Posterior cingulate gyrus (tissue), 11 donors: ENCODE measurements at regions of chr19 and their contacts with region 1.

Region 1: DNA sequence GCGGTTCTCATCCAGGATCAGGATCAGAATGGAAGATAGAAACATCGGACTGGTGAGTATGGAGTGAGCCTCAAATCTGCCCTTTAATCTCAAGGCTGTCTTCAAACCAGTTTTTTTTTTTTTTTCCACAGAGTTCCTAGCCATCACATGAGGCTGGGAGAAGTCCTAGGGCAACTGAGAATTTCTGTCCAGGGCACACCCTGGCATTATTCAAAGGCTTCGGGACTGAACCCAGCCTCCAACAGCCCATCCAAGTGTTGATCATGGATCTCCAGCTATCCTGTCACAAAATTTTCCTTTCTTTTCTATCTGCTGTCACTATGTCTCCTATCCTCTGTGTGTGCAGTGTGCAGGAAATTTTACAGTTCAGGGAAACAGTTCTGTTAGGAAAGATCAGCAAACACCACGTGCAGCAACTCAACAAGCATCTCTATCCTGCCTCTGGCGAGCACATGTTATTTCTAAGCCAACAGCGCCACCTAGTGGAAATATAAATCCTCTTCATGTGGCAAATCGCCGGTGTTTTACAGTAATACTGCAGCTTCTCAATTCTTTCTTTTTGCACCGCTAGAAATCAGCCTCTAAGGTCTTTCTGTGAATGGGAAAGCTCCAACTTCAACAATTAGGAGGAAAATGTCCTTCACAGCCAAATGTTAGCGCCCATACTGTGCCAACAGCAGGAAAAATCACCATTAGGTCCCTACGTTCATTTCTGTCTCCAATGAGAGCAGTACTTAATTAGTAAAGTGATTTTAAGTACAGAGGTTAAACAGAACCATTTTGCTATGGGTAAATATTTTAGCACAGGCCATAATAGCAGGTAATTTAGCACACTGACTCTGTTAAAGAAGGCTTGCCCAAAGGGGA is 21.4 kb upstream of the ZNF181 start:
- DNase-seq: peak in 4 of 10 donors; percentile 18 to 50 (median 33)

Region 2: DNA sequence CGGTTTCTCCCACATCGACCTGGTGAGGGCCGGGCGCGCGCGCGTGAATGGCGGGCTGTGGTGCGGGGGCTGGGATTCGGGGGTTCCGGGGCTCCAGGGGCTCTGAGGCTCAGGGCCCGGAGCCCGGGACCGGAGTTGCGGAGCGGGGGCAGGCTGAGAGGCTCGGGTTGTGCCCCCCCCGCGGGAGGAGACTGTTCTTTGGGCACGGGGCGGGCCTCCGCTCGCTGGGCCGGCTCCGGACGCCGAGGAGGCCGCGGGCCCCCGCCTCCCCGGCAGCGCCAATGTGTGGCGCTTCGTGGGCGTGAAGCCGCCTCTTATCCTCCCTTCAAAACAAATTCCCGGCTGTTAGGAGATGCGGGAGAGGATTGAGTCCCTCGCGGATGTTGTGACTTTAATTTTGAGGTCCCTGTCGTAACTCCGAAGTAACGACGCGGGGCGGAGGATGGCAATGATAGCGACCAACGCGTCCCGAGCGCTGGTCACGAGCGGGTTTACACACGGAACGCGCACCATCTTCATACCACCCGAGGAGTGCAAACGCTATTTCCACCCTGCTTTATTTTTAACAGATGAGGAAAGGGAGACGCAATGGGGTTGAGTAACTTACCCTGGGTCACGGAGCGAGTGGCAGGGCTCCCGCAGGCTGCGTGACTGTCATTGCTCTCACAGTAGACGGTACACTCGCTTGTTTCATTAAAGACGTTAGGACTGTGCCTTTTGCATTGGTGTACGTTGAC is 283.9 kb before region 1 on chr19:
- intact Hi-C with region 1: no loop called
- DNase-seq: peak in 6 of 10 donors; percentile 13 to 89 (median 18)

Region 3: DNA sequence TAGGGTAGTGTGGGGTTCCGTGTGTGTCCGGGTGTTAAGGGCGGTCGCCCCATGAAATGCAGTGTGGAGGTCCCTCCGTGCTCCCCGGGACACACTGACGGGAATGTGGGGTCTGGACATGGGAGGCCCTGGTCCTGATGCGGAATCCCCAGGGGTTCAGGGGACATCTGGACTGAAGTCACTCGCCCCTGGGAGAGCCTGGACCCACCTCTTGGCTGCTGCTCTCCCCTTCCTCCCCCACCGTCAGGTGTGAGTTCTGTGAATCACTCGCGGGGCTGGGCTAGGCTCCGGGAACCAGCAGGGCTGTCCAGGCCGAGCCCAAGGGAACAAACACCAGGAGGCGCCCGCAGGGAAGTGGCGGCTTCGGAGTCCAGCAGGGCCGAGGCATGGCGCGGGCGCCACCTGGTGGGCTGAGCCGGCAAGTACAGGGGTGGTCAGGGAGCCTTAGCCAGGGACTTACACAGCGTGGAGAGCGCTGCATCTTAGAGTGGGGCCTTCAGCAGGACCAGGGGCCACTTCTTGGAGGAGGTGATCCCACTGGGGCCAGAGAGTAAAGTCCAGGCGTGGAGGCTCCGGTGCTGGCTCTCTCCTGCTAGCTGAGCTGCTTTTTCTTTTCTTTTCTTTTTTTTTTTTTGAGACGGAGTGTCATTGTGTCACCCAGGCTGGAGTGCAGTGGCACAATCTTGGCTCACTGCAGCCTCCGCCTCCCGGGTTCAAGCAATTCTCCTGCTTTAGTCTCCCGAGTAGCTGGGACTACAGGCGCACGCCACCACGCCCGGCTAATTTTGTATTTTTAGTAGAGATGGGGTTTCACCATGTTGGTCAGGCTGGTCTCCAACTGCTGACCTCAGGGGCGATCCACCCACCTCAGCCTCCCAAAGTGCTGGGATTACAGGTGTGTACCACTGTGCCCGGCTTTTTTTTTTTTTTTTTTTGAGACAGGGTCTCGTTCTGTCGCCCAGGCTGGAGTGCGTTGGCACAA is 211.0 kb before region 1 on chr19:
- intact Hi-C with region 1: loop called (anchors 1 kb)
- DNase-seq: peak; percentile 78 to 99 (median 94)

Region 4: GRCh38 chr19:34556488-34556887 is 156.1 kb before region 1 on chr19:
- intact Hi-C with region 1: loop called (anchors 2 kb)
- DNase-seq: peak in 2 of 10 donors; percentile 38 to 48

Region 5: DNA sequence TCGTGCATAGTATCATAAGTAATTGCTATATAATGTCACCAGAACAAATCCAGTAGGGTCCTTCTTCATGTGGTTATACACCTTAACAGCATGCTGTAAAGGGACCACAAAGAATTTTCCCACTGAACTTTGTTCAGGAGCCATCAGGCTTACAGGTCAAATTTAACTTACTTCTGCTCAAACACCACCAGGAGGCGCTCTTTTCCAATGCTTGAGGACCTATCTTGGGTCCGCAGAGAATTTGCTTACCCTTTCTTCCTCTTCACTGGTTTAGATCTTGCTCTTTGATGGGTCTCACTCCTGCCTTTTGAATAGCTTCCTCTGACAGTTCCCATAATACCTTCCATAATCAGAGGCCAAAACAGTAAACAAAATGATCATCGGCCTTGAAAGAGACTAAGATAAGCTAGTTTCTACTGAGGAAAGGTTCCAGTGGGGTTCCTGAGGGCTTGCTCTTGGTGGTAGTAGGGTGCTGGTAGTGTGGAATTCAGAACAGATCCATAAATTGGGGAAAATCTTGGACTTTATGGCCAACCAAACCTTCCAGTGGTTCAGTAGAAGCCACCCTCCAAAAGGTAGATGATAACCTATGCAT is 73.0 kb before region 1 on chr19:
- intact Hi-C with region 1: loop called (anchors 1 kb)
- DNase-seq: peak in 5 of 10 donors; percentile 17 to 80 (median 54)

Region 6: DNA sequence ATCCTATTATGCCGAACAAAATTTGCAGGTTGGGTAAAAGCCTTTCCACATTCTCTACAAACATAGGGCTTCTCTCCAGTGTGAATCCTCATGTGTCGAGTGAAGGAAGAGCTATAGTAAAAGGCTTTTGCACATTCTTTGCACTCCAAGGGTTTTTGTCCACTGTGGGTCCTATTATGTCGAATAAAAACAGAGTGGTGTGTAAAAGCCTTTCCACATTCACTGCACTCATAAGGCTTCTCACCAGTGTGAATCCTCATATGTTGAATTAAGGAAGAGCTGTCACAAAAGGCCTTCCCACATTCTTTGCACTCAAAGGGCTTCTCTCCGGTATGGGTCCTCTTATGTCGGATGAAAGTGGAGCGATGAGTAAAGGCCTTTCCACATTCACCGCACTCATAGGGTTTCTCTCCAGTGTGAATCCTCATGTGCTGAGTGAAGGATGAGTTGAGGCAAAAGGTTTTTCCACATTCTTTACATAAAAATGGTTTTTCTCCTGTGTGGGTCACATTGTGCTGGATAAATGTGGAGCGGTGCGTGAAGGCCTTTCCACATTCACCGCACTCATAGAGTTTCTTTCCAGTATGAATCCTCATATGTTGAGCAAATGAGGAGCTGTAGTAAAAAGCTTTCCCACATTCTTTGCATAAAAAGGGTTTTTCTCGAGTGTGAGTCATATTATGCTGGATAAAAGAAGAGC is 46.7 kb after region 1 on chr19:
- intact Hi-C with region 1: no loop called
- DNase-seq: no peak